Tibial artery (tissue), 4 donors: ENCODE measurements at regions of chr7 and their contacts with region 1.

Region 1: DNA sequence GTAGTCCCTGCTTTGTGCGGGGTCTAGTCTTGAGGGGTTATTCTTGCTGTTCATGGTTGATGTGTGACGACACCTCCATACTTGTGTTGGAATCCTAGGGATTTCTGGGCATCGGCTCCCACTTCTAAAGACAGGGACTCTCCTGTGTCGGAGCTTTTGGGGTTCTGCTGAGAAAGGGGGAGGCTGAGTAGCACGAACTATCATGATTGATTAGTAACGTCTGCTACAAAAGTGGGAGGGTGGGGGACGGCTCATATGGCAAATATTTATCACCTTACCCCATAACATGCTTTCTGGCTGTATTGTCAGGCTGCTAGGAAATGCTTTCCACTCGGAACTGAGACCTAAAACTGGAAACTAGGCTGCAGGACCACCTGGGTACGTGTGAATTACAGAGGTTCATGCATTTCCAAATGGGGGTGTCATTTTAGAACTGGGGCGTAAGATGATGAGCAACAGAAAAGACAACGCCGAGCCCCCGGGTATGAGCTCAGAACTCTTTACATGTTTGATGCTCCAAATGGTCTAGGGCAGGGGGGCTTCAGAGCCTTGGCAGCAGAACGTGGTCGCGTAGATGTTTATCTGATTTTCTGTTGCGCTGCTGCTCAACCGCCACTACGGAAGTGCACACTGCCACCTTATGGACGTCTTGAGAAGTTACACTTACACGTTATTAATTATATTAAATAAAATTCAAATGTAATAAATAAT is 15.1 kb upstream of the NME8 start:
- DNase-seq: peak in 1 of 2 donors; percentile 21
- H3K4me3 ChIP-seq: peak overlapping the region; percentile 25 to 50
- H3K27ac ChIP-seq: no peak overlapping the region
- H3K4me1 ChIP-seq: peaks cover 0 to 6% (median 2%) of the 10 kb centered on the region in 4 donors
- H3K27me3 ChIP-seq: no peaks in the 10 kb centered on the region
- CTCF ChIP-seq: peak; percentile 61 to 70

Region 2: DNA sequence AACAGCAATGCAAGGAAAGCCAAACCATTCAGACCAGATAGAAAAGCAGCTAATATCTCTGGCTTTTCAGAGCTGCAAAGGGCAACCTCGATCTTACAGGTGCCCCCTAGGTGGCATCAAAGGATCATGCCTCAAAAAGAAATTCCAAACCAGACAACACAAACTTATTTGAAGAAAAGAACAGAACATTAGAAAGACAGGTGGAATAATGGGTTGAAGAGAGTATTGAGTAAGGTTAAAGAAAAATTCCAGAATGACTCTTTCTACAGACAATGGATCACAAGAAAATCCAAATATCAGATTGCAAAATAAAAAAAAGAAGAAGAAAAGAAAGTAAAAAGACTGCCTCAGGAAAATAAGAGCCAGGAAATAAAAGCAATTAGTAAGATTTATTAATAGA is 598.3 kb before region 1 on chr7:
- intact Hi-C with region 1: loop called (anchors 5 kb)
- DNase-seq: no peak
- H3K4me3 ChIP-seq: no peak overlapping the region
- H3K27ac ChIP-seq: no peak overlapping the region
- H3K4me1 ChIP-seq: peaks cover 0 to 6% (median 4%) of the 10 kb centered on the region in 4 donors
- H3K27me3 ChIP-seq: no peaks in the 10 kb centered on the region
- CTCF ChIP-seq: peak; percentile 37 to 51

Region 3: DNA sequence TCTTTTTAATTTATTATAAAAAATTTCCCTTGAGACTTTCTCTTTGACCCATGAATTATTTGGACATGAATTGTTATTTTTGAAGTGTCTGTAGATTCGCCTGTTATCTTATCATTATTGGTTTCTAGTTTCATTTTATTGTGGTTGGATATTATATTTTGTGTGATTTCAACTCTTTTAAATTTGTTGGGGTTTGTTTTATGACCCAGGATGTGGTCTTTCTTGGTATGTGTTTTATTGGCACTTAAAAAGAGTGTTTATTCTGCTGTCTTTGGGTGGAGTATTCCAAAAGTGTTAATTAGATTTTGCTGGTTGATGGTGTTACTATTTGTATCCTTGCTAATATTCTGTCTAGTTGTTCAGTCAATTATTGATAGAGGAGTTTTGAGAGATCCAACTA is 200.2 kb before region 1 on chr7:
- intact Hi-C with region 1: loop called (anchors 5 kb)
- DNase-seq: no peak
- H3K4me3 ChIP-seq: no peak overlapping the region
- H3K27ac ChIP-seq: no peak overlapping the region
- H3K4me1 ChIP-seq: no peaks in the 10 kb centered on the region
- H3K27me3 ChIP-seq: no peaks in the 10 kb centered on the region
- CTCF ChIP-seq: no peak

Region 4: GRCh38 chr7:37698276-37698675 is 135.0 kb before region 1 on chr7:
- intact Hi-C with region 1: no loop called
- DNase-seq: no peak
- H3K4me3 ChIP-seq: no peak overlapping the region
- H3K27ac ChIP-seq: no peak overlapping the region
- H3K4me1 ChIP-seq: no peaks in the 10 kb centered on the region
- H3K27me3 ChIP-seq: no peaks in the 10 kb centered on the region
- CTCF ChIP-seq: no peak

Region 5: DNA sequence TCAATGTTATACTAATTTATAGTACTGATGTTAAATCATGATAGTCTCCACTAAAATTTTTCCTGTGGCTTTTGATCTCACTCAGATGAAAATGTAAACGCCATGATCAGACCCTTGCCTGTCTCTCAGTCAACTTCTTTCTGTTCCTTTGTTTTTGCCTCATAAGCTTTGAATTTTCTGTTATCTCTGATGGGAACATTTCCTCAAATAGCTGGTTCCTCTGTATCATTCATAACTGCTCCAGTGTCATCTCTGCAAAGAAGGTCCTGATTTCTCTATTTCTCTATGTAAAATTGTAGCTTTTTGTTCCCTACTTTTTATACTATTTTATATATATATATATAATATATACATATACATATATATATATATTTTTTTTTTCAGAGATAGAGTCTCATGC is 82.2 kb before region 1 on chr7:
- intact Hi-C with region 1: no loop called
- DNase-seq: no peak
- H3K4me3 ChIP-seq: no peak overlapping the region
- H3K27ac ChIP-seq: no peak overlapping the region
- H3K4me1 ChIP-seq: no peaks in the 10 kb centered on the region
- H3K27me3 ChIP-seq: no peaks in the 10 kb centered on the region
- CTCF ChIP-seq: no peak